WTC11 (cell line): ENCODE measurements at regions of chr19 and their contacts with region 1.

Region 1: GRCh38 chr19:10259162-10259905 is 7.3 kb downstream of the MRPL4 start:
- DNase-seq: peak; percentile 96
- ATAC-seq: peak; percentile 91
- H3K4me3 Mint-ChIP-seq: no peak overlapping the region
- H3K27ac Mint-ChIP-seq: no peak overlapping the region
- H3K4me1 Mint-ChIP-seq: no peaks in the 10 kb centered on the region
- H3K27me3 Mint-ChIP-seq: peaks cover 3% of the 10 kb centered on the region; the same call in 1 of the 2 replicates
- CTCF ChIP-seq: peak; percentile 52

Region 2: DNA sequence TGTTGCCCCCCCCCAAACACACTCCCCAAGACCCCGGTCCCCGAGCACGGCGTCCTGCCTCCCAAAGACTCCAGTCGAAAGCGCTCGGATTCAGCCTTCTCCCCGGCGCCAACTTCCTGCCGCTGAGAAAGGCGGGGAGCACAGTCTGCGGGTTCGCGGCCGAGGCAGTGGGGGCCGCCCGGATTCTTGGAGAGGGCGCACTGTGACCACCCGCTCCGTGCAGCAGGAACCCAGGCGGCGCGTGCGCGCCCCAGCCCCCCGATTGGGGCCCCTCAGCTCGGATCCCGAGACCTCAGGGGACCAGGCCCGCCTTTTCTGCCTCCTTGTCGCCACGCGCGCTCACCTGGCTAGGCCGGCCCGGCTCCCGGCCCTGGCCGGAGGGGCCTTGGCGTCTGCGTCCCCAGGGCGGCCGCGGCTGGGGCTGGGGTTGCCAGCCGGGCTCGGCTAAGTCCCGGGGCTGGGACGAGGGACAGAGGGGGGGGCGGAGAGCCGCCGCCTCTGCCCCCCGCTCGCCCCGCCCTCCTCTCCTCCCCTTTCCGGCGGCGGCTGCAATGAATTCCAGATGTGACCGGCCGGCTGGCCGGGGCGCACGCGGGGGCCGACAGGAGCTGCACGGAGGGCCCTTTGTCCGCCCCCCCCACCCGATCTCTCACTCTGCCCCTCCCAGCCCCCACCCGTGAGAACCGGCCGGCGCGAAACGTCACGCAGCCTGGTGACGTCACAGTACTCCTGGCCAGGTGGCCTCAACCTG is 28.3 kb before region 1 on chr19 and contains the start of gene S1PR2:
- CTCF ChIA-PET with region 1: interaction called, 13 read pairs
- POLR2A ChIA-PET with region 1: no interaction called
- DNase-seq: peak; percentile 86
- ATAC-seq: peak; percentile 72
- H3K4me3 Mint-ChIP-seq: peak within 1 kb of the TSS; percentile 72
- H3K27ac Mint-ChIP-seq: peak within 1 kb of the TSS; percentile 92
- H3K4me1 Mint-ChIP-seq: peaks cover 11% of the 10 kb centered on the region
- H3K27me3 Mint-ChIP-seq: no peaks in the 10 kb centered on the region; the same call in 1 of the 2 replicates
- CTCF ChIP-seq: no peak
- total RNA-seq, gene S1PR2: 12.9 to 13.6 TPM (median 13.2 TPM) in 3 replicates

Region 3: GRCh38 chr19:10279737-10280442 is 20.6 kb after region 1 on chr19:
- CTCF ChIA-PET with region 1: interaction called, 11 read pairs
- POLR2A ChIA-PET with region 1: interaction called, 3 read pairs
- DNase-seq: no peak
- ATAC-seq: no peak
- H3K4me3 Mint-ChIP-seq: no peak overlapping the region
- H3K27ac Mint-ChIP-seq: 0 out of 2 replicates have a peak overlapping the region, but pooled peaks have one; percentile 2
- H3K4me1 Mint-ChIP-seq: no peaks in the 10 kb centered on the region
- H3K27me3 Mint-ChIP-seq: peaks cover 4% of the 10 kb centered on the region
- CTCF ChIP-seq: no peak

Region 4: DNA sequence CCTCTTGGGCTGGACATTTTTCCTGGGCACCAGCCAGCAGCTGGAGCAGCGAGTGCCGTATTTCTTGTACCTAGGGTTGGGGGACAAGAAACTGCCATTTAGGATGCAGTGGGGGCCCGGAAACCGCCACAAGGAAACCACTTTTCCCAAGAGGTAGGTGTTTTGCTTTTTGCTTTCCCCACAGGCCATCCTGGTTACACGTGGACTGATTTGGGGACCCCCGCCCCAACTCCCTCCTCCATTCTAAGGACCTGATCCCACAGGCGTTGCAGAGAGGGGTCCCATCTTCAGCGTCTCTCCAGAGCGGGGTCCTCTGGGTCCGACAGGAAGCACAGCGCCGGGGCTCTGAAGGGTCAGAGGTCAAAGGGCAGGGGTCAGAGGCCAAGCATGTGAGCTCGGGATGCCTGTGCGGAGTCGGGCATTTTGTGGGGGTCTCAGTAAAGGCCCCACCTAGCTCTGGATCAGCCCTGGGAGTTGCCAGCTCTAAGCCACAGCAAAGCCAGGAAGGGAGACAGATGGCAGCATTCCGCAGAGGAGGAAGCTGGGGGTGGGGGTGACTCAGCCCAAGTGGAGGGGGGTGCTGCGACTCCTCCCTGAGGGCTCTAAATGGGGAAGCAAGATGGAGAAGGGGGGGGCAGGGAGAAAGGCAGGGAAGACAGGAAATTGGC is 45.9 kb after region 1 on chr19:
- CTCF ChIA-PET with region 1: interaction called, 10 read pairs
- POLR2A ChIA-PET with region 1: no interaction called
- DNase-seq: no peak
- ATAC-seq: no peak
- H3K4me3 Mint-ChIP-seq: no peak overlapping the region
- H3K27ac Mint-ChIP-seq: no peak overlapping the region
- H3K4me1 Mint-ChIP-seq: no peaks in the 10 kb centered on the region
- H3K27me3 Mint-ChIP-seq: peaks cover 5% of the 10 kb centered on the region
- CTCF ChIP-seq: no peak

Region 5: GRCh38 chr19:10353793-10354391 is 94.6 kb after region 1 on chr19:
- CTCF ChIA-PET with region 1: interaction called, 22 read pairs
- POLR2A ChIA-PET with region 1: no interaction called
- DNase-seq: peak; percentile 100
- ATAC-seq: peak; percentile 69
- H3K4me3 Mint-ChIP-seq: peak overlapping the region; percentile 84
- H3K27ac Mint-ChIP-seq: peak overlapping the region; percentile 94
- H3K4me1 Mint-ChIP-seq: peaks cover 14% of the 10 kb centered on the region
- H3K27me3 Mint-ChIP-seq: no peaks in the 10 kb centered on the region
- CTCF ChIP-seq: no peak

Region 6: DNA sequence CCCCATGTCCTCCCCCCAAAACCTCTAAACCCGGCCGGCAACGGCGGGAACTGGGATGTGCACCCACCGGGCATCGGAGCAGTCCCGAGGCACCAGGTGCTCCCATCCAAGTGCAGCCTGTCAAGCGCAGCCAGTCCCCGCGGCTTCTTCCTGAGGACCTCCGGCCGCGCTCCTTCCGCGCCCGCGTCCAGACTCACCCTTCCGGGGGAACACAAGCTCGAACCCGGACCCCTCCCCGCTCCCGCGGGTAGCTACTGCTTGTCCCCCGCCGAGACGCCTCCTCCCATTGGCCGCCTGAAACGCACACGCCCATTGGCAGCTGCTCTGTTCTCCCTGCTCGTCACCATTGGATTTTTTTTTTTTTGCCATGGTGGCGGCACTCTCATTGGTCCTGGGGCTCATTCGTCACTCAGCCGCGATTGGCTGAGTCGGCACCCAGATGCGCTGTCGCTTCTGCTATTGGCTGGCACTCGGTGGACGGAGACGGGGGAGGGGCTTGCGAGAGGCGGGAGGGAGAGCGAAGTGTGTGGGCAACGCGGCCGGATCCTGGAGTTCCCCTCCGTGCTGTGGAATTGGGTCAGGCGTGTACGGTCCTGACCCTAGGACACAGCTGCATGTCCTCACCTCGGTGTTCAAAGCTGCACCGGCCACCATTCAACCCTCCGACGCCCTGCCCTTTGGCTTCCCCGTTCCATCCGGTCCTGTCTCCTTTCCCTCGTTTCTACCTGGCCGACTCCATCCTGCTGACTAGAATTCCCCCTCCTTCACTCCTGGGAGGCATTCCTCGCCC is 121.2 kb after region 1 on chr19 and contains the start of gene TYK2:
- CTCF ChIA-PET with region 1: interaction called, 149 read pairs
- POLR2A ChIA-PET with region 1: no interaction called
- DNase-seq: peak; percentile 93
- ATAC-seq: peak; percentile 96
- H3K4me3 Mint-ChIP-seq: peak within 1 kb of the TSS; percentile 88
- H3K27ac Mint-ChIP-seq: peak within 1 kb of the TSS; percentile 97
- H3K4me1 Mint-ChIP-seq: peaks cover 9% of the 10 kb centered on the region
- H3K27me3 Mint-ChIP-seq: peaks cover 3% of the 10 kb centered on the region; the same call in 1 of the 2 replicates
- CTCF ChIP-seq: no peak
- total RNA-seq, gene TYK2: 63.8 to 66.4 TPM (median 65.1 TPM) in 3 replicates